ENCODE measurements at regions of chr17 and their contacts with region 1.

Region 1: DNA sequence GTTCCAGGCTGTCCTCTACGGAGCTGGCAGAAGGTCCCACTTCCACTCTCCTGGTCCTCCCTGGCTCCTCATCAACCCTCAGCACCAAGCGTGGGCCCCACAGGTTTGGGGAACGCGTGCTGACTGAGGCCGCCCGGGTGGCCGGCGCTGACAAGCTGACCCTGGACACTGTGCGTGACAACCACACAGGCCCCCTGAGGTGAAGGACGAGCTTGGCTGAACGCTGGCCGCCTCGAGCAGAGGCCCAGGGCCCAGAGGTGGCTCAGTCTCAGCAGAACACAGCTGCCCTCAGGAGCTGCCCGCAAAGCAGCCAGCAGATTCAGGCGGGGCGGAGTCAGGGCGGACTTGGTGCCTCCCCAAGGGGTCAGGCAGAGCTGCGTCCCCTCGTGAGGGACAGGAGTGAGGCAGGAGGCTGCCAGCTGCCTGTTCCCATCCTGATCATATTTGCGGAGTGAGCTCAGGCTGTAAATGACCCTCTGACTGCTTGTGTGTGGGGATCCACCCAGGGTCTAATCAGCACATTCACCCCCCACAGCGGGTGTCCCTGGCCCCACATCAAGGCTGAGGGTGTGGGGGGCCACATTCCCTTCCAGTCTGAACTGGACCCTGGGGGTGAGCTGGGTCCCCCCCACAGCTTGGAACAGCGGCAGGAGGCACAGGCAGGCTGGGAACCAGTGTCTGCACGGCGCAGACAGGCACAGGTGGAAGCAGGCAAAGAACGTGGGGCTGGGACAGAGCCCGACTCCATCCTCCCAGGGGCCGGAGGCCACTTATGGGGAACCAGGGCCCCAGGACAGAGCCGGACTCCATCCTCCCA is 105.1 kb upstream of the METRNL start:
- DNase-seq: no peak
- H3K4me3 ChIP-seq: no peak overlapping the region
- H3K27ac ChIP-seq: no peak overlapping the region
- H3K4me1 ChIP-seq: peaks cover 40% of the 10 kb centered on the region
- CTCF ChIP-seq: no peak

Region 2: GRCh38 chr17:82923366-82924113 is 50.8 kb before region 1 on chr17:
- CTCF ChIA-PET with region 1: no interaction called
- POLR2A ChIA-PET with region 1: interaction called, 3 read pairs
- intact Hi-C with region 1: loop called (anchors 1 kb)
- DNase-seq: peak; percentile 93
- H3K4me3 ChIP-seq: peak overlapping the region; percentile 5
- H3K27ac ChIP-seq: peak overlapping the region; percentile 66
- H3K4me1 ChIP-seq: peaks cover 25% of the 10 kb centered on the region
- CTCF ChIP-seq: no peak